Tibial artery (tissue), 4 donors: ENCODE measurements at regions of chr1 and their contacts with region 1.

Region 1: GRCh38 chr1:151539990-151540981 is at the start of gene TUFT1:
- DNase-seq: peak; percentile 94 to 95
- H3K4me3 ChIP-seq: peak within 1 kb of the TSS; percentile 59 to 68
- H3K27ac ChIP-seq: peak within 1 kb of the TSS; percentile 71 to 79
- H3K4me1 ChIP-seq: peaks cover 0 to 39% (median 22%) of the 10 kb centered on the region in 4 donors
- H3K27me3 ChIP-seq: no peaks in the 10 kb centered on the region
- CTCF ChIP-seq: no peak

Region 2: DNA sequence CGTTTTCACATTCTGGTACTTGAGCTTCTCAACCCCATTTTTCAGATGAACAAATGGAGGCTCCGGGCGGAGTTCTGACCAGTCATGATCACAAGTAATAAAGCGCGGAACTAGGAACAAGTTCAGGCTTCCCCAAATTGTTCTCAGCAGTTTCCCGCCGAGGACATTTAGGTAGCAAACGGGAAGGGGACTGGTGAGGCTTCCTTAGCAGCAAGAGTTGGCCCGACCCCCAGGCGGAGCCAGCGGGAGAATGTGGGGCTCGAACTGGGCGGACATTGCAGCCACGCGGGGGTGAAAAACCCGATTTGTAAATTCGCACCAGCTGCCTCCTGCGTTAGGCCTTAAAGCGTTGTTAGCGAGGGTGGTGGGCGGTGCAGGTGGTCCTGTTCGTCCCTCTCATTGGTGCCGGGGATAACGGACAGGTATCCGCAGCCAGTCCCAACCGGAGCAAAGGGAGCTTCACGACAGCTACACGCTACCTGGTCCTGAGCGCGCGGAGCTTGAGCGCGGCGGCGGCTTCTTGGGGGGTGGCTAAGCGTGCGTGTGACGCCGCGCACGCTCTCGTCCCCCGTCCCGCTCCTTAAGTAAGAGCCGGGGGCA is 409.2 kb before region 1 on chr1:
- intact Hi-C with region 1: no loop called
- DNase-seq: peak; percentile 84 to 92
- H3K4me3 ChIP-seq: peak overlapping the region; percentile 40 to 54
- H3K27ac ChIP-seq: peak overlapping the region; percentile 57 to 64
- H3K4me1 ChIP-seq: peaks cover 0 to 14% (median 4%) of the 10 kb centered on the region in 4 donors
- H3K27me3 ChIP-seq: no peaks in the 10 kb centered on the region
- CTCF ChIP-seq: peak in 1 of 2 experiments; percentile 4

Region 3: DNA sequence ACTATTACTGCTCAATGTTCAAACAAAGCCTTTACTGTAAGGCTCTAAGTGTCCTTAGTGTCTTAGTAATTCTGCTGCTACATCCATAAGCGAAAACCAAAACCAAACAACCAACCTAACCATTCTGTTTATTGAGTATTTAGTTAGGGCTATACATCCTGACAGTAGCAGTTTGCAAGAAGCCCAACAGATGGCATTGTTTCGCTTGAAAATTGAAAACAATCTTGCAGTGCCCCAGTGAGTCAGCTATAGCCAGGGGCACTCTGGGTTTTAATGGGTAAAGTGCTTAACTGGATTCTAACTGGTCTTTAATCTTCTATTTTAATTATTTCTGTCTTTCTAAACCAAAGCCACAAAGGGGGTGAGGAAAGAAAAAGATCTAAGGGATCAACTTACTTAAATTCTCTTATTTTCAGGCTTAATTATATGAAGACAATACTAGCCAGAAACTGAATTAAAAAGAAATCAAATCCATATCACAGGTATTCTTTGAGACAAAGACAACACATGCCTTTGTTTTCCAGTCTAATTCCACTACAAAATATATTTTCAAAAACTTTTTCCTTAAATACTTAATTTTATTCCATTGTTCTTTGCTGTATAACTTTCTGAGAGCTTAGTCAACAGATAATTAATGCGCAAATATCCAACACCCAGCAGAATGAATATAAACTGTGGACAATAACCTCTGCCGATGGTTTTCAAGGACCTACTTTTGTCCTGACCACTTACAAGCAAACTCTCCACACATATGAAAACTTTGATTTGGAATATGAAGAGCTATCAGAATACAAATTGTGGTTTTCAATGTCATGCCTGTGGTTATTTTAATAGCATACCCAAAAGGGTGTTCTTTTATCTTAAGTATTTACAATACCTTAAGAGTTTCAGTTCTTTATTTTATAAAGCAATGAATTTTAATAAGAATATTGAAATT is 96.2 kb before region 1 on chr1:
- intact Hi-C with region 1: loop called (anchors 10 kb)
- DNase-seq: peak in 1 of 2 donors; percentile 54
- H3K4me3 ChIP-seq: no peak overlapping the region
- H3K27ac ChIP-seq: peak overlapping the region in 1 of 2 donors; percentile 4
- H3K4me1 ChIP-seq: peaks cover 0 to 55% (median 28%) of the 10 kb centered on the region in 4 donors
- H3K27me3 ChIP-seq: no peaks in the 10 kb centered on the region
- CTCF ChIP-seq: peak; percentile 64 to 75

Region 4: DNA sequence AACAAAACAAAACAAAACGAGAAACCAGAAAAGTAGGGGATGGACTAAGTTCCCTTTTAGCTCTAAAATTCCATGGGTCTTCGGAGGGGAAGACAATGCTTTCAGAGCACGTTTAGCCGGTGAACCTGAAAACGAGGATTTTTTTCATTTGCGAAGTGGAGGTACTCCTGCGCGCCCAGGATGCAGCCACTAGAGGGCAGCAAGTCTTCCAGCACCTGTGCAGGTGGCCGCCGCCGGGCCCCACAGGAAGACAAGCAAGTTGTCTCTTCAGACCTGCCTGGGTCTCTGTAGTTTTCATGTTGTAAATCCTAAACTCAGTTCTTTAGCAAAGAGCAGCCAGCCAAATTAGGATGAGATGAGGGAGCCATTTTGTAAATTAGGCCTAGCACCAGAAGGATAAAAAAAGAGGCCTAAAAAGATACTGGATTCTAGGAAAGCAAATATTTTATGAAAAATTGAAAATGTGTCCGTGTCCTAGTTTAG is 53.9 kb after region 1 on chr1:
- intact Hi-C with region 1: loop called (anchors 10 kb)
- DNase-seq: peak; percentile 59 to 83
- H3K4me3 ChIP-seq: no peak overlapping the region
- H3K27ac ChIP-seq: no peak overlapping the region
- H3K4me1 ChIP-seq: peaks cover 0 to 7% (median 0%) of the 10 kb centered on the region in 4 donors
- H3K27me3 ChIP-seq: no peaks in the 10 kb centered on the region
- CTCF ChIP-seq: peak; percentile 82 to 84

Region 5: DNA sequence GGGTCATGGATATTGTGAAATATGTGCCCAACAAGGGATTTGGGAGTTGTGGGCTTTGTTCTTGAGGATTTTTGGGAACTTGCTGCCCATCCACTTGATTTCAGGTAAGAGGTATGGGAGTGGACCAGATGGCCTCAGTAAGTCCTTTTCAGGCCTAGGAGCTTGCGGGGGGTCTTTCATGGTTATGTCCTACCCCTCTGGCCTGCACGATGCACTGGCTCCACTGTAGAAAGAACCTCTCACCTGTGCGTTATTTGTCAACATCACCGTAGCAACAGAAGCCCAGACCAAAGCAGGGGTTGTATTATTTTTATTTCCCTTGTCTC is 189.6 kb after region 1 on chr1:
- intact Hi-C with region 1: loop called (anchors 5 kb)
- DNase-seq: no peak
- H3K4me3 ChIP-seq: no peak overlapping the region
- H3K27ac ChIP-seq: no peak overlapping the region
- H3K4me1 ChIP-seq: peaks cover 0 to 16% (median 10%) of the 10 kb centered on the region in 4 donors
- H3K27me3 ChIP-seq: peaks cover 0 to 7% of the 10 kb centered on the region in 2 donors
- CTCF ChIP-seq: no peak